PC-9 (cell line): ENCODE measurements at regions of chr16 and their contacts with region 1.

Region 1: GRCh38 chr16:74641969-74642368 is 24.7 kb downstream of the RFWD3 start:
- DNase-seq: no peak
- H3K4me3 ChIP-seq: no peak overlapping the region
- H3K27ac ChIP-seq: no peak overlapping the region
- H3K4me1 ChIP-seq: no peaks in the 10 kb centered on the region
- H3K27me3 ChIP-seq: no peaks in the 10 kb centered on the region
- CTCF ChIP-seq: no peak

Region 2: DNA sequence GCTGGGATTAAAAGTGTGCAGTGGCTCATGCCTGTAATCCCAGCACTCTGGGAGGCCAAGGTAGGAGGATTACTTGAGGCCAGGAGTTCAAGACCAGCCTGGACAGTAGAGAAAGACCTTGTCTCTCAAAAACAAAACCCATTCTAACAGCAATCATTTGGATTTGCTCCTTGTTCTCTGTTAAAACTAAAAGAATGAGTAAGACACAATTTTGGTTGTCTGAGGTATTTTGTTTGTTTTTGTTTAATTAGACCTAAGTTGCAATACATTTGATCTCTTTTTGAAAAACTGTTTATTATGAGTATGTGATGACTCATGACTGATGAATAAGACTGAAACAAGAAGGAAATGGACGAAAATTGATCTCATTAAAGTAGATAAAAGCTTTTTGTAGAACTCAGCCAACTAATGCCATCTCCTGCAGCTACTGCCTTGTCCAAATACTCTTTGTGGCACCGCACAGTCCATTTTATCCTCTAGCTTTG is 64.0 kb before region 1 on chr16:
- CTCF ChIA-PET with region 1: interaction called, 16 read pairs
- POLR2A ChIA-PET with region 1: no interaction called
- intact Hi-C with region 1: no loop called
- DNase-seq: peak in 1 of 2 experiments; percentile 84
- H3K4me3 ChIP-seq: no peak overlapping the region
- H3K27ac ChIP-seq: peak overlapping the region; percentile 77
- H3K4me1 ChIP-seq: peaks cover 21% of the 10 kb centered on the region
- H3K27me3 ChIP-seq: no peaks in the 10 kb centered on the region
- CTCF ChIP-seq: no peak

Region 3: GRCh38 chr16:74606521-74607310 is 35.3 kb before region 1 on chr16 and contains the start of gene GLG1:
- CTCF ChIA-PET with region 1: no interaction called
- POLR2A ChIA-PET with region 1: no interaction called
- intact Hi-C with region 1: no loop called
- DNase-seq: peak; percentile 74 to 86
- H3K4me3 ChIP-seq: peak within 1 kb of the TSS; percentile 98
- H3K27ac ChIP-seq: peak within 1 kb of the TSS; percentile 69
- H3K4me1 ChIP-seq: peaks cover 33% of the 10 kb centered on the region
- H3K27me3 ChIP-seq: no peaks in the 10 kb centered on the region
- CTCF ChIP-seq: no peak
- total RNA-seq, gene GLG1: 117 TPM in 2 replicates

Region 4: GRCh38 chr16:74709441-74709877 is 67.5 kb after region 1 on chr16:
- CTCF ChIA-PET with region 1: no interaction called
- POLR2A ChIA-PET with region 1: no interaction called
- intact Hi-C with region 1: no loop called
- DNase-seq: peak; percentile 79 to 81
- H3K4me3 ChIP-seq: no peak overlapping the region
- H3K27ac ChIP-seq: no peak overlapping the region
- H3K4me1 ChIP-seq: peaks cover 4% of the 10 kb centered on the region; the same call in 1 of the 2 replicates
- H3K27me3 ChIP-seq: no peaks in the 10 kb centered on the region
- CTCF ChIP-seq: peak; percentile 98